Esophagus muscularis mucosa (tissue), 4 donors: ENCODE measurements at regions of chr17 and their contacts with region 1.

Region 1: GRCh38 chr17:5438716-5439445 is at the start of gene C1QBP:
- DNase-seq: peak; percentile 95
- H3K4me3 ChIP-seq: peak within 1 kb of the TSS; percentile 73 to 96 (median 86)
- H3K27ac ChIP-seq: peak within 1 kb of the TSS; percentile 75 to 89 (median 78)
- H3K4me1 ChIP-seq: peaks cover 18 to 40% (median 33%) of the 10 kb centered on the region in 4 donors
- H3K27me3 ChIP-seq: no peaks in the 10 kb centered on the region
- CTCF ChIP-seq: peak; percentile 99
- EP300 ChIP-seq: no peak
- POLR2A ChIP-seq: peak; percentile 16
- total RNA-seq, gene C1QBP: 92.9 to 124 (median 95.5) TPM

Region 2: DNA sequence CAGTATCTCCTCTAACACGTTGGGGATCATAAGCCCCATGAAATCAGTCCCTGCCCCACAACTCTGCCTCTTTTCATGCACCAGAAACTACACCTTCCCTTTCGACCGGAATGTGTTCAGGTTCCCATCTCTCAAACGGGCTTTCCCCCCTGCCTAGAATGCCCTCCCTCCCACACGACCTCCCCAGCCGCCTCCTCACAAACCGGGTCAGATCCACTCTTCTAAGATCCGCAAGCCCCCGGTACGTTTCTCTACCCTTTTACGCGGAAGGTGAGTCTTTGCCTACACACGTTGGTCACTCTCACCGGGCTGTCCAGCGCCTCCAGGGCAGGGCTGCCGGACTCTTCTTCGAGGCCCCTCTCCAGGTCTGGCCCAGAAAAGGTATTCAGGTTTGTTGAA is 29.2 kb after region 1 on chr17:
- intact Hi-C with region 1: loop called (anchors 2 kb)
- DNase-seq: no peak
- H3K4me3 ChIP-seq: peak overlapping the region; percentile 84 to 99 (median 95)
- H3K27ac ChIP-seq: peak overlapping the region; percentile 81 to 89 (median 85)
- H3K4me1 ChIP-seq: peaks cover 19 to 36% (median 27%) of the 10 kb centered on the region in 4 donors
- H3K27me3 ChIP-seq: no peaks in the 10 kb centered on the region
- CTCF ChIP-seq: no peak
- EP300 ChIP-seq: no peak
- POLR2A ChIP-seq: no peak